ENCODE measurements at regions of chr3 and their contacts with region 1.

Region 1: DNA sequence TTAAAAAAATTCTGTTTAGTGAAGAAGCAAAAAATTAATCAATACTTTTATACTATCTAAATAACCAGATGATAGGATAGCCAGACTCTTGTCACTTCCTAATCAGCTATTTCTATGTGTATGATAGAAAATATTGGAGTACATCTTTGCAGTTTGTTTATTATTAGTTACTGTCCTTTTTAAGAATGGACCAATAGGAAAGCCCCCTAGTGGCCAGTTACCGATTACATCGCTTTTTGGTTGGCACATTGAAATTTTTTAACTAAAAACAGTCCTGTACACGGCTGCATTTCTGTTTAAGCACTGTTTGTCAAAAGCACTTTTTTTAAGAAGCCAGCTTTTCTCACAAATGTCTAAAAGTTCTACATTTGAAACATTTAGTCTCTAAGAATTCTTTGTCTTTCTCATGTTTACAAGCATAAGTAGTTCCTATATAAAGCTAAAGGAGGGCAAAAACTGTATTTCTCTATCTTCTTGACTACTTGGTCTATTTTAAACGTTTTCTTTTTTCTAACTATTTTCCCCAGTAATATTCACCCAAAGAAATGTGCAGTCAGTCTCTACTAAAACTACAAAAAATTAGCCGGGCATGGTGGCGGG is 253.2 kb upstream of the LRTM1 start:
- DNase-seq: peak; percentile 14
- H3K4me3 Mint-ChIP-seq: no peak overlapping the region
- H3K27ac Mint-ChIP-seq: no peak overlapping the region
- H3K4me1 Mint-ChIP-seq: no peaks in the 10 kb centered on the region
- H3K27me3 Mint-ChIP-seq: peaks cover 6% of the 10 kb centered on the region

Region 2: DNA sequence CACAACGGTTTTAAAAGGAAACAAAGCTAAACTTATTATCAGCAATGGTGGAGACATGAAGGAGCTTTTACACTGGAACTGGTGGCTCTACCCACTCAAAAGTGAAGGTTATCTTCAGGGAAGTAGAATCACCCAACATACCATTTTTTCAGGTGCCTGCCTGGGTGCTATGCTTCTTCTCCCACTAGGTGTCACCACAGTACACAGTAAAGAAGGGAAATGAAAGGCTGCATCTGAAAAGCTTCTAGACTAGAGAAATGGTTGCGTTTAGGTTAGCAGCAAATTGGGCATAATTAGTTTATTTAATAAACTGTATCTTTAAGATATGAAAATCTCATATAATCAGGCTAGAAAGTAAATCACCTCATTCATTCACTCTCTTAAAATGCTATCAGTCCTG is 1242.4 kb before region 1 on chr3:
- CTCF ChIA-PET with region 1: no interaction called
- intact Hi-C with region 1: loop called (anchors 5 kb)
- DNase-seq: peak; percentile 55
- H3K4me3 Mint-ChIP-seq: no peak overlapping the region
- H3K27ac Mint-ChIP-seq: no peak overlapping the region
- H3K4me1 Mint-ChIP-seq: no peaks in the 10 kb centered on the region
- H3K27me3 Mint-ChIP-seq: peaks cover 24% of the 10 kb centered on the region

Region 3: GRCh38 chr3:54427941-54428871 is 752.8 kb before region 1 on chr3:
- CTCF ChIA-PET with region 1: no interaction called
- intact Hi-C with region 1: loop called (anchors 5 kb)
- DNase-seq: peak; percentile 67
- H3K4me3 Mint-ChIP-seq: no peak overlapping the region
- H3K27ac Mint-ChIP-seq: no peak overlapping the region
- H3K4me1 Mint-ChIP-seq: no peaks in the 10 kb centered on the region
- H3K27me3 Mint-ChIP-seq: peaks cover 3% of the 10 kb centered on the region

Region 4: DNA sequence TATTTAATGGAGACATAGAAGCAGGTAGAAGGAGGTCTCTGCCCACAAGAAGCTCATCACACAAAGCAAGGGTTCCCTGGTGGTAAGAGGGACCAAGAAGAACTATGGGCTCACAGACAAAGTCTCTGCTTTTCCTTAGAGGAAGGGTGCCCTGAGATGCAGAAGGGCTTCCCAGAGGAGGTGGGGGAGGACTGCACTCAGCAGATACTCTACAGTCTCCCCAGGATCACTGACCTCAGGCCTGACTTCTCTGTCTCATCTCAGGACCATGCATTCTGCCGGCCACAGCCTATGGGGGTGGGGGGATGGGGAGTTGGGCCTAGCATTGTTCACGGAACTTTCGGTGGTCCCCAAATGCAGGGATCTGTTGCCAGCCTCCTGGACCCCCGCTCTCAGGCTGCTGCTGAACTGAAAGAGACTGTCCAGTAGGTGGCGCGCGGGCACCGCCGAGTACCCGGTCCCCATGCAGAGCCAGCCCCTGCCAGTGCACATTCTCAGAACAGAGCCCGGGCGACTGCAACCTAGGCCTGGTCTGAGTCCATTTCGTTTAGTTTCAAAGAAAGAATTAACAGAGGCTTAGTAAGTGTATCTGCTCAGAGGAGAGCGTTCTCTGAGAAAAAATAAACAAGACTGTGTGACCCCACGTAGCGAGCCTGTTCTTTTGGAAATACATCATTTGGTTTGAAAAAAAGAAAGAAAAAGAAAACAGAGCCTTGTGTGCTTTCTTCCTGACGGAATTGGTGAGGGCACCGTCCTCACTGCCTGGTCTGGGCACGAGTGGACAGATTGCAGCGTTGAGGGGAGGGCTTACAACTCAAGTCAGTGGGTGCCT is 327.2 kb before region 1 on chr3:
- CTCF ChIA-PET with region 1: no interaction called
- intact Hi-C with region 1: loop called (anchors 2 kb)
- DNase-seq: peak; percentile 55
- H3K4me3 Mint-ChIP-seq: no peak overlapping the region
- H3K27ac Mint-ChIP-seq: no peak overlapping the region
- H3K4me1 Mint-ChIP-seq: no peaks in the 10 kb centered on the region
- H3K27me3 Mint-ChIP-seq: peaks cover 6% of the 10 kb centered on the region